Gastrocnemius medialis (tissue), 4 donors: ENCODE measurements at regions of chr1 and their contacts with region 1.

Region 1: GRCh38 chr1:154344977-154345837 is 19.9 kb downstream of the ATP8B2 start:
- DNase-seq: no peak
- ATAC-seq: no peak
- H3K4me3 ChIP-seq: no peak overlapping the region
- H3K27ac ChIP-seq: no peak overlapping the region
- H3K4me1 ChIP-seq: no peaks in the 10 kb centered on the region
- H3K27me3 ChIP-seq: no peaks in the 10 kb centered on the region
- CTCF ChIP-seq: peak in 2 of 5 experiments; percentile 31 to 35
- POLR2A ChIP-seq: no peak

Region 2: DNA sequence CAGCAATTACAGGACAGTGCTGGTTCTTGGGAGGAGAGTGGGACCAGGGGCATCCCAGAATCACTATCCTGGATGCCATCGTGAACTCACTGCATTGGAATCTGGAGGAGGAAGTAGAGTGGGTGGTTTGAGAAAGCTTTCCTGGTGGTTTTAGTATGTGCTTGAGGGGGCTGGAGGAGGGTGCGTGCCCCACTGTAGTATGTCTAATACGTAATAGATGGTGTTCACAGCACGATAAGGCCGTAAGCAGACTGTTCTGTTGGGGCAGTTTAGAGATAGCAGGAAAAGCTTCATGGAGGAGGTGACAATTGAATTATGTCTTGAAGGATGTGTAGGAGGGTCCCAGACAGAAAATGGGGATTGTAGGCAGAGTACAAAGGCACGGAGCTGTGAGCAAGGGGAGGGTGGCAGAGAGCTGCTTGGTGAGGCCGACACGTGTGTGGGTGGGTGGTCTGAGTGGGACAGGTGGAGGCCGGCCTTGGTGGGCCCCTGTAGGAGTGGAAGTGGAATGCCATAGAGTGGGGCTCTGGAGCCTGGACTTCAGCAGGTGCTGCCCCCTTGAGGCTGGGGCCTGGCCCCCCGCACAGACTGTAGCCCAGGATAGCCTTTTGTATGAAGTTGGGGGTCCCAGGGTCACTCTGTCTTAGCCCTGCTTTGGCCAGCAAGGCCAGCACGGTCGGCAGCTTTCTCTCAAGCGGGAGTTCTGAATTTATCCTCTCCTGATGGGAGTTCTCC is 97.0 kb after region 1 on chr1:
- in situ Hi-C with region 1: no loop called
- intact Hi-C with region 1: loop called (anchors 5 kb)
- DNase-seq: no peak
- ATAC-seq: no peak
- H3K4me3 ChIP-seq: no peak overlapping the region
- H3K27ac ChIP-seq: peak overlapping the region; percentile 41 to 76 (median 66)
- H3K4me1 ChIP-seq: peaks cover 10% of the 10 kb centered on the region in 2 donors
- H3K27me3 ChIP-seq: no peaks in the 10 kb centered on the region
- CTCF ChIP-seq: peak in 4 of 5 experiments; percentile 43 to 63 (median 51)
- POLR2A ChIP-seq: no peak